ENCODE measurements at regions of chr10 and their contacts with region 1.

Region 1: GRCh38 chr10:51389415-51390321 is 309.7 kb downstream of the CSTF2T start:
- DNase-seq: peak; percentile 37 to 60 (median 46)
- ATAC-seq: peak; percentile 55 to 80 (median 73)
- H3K4me3 ChIP-seq: no peak overlapping the region
- H3K27ac ChIP-seq: peak overlapping the region in 3 of 12 donors; percentile 10 to 19 (median 19)
- H3K4me1 ChIP-seq: peaks cover 0 to 23% (median 6%) of the 10 kb centered on the region in 12 donors
- H3K27me3 ChIP-seq: no peaks in the 10 kb centered on the region
- CTCF ChIP-seq: peak; percentile 53 to 81 (median 74)
- POLR2A ChIP-seq: no peak

Region 2: GRCh38 chr10:51377932-51378599 is 11.6 kb before region 1 on chr10:
- intact Hi-C with region 1: no loop called
- DNase-seq: no peak
- ATAC-seq: peak in 1 of 4 donors; percentile 9
- H3K4me3 ChIP-seq: no peak overlapping the region
- H3K27ac ChIP-seq: peak overlapping the region in 4 of 12 donors; percentile 3 to 36 (median 28)
- H3K4me1 ChIP-seq: peaks cover 0 to 25% (median 7%) of the 10 kb centered on the region in 12 donors
- H3K27me3 ChIP-seq: no peaks in the 10 kb centered on the region
- CTCF ChIP-seq: no peak
- POLR2A ChIP-seq: no peak

Region 3: GRCh38 chr10:51422311-51423120 is 32.8 kb after region 1 on chr10:
- intact Hi-C with region 1: loop called in 2 of 10 experiments (anchors 5 kb)
- DNase-seq: peak; percentile 52 to 61 (median 57)
- ATAC-seq: peak; percentile 47 to 72 (median 60)
- H3K4me3 ChIP-seq: no peak overlapping the region
- H3K27ac ChIP-seq: peak overlapping the region; percentile 52 to 80 (median 72)
- H3K4me1 ChIP-seq: peaks cover 0 to 48% (median 10%) of the 10 kb centered on the region in 12 donors
- H3K27me3 ChIP-seq: no peaks in the 10 kb centered on the region
- CTCF ChIP-seq: peak; percentile 39 to 84 (median 70)
- POLR2A ChIP-seq: no peak

Region 4: DNA sequence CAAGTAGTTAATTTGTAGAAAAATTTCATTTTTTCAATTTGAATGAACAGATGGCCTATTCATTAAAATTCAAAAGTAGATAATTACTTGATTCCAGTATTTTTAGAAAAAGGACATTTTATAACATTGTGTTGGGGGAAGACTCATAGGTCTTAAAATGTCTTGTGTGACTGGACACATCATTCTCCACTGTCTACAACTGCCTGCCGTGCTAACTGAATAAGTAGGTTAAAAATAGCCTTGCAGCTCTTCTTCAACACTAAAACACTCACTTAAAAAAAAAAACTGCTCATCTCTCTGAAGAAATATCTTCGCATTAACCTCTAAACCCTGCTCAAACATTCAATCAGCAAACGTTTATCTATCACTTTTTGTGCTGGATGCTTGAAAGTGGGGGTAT is 55.9 kb after region 1 on chr10:
- intact Hi-C with region 1: loop called in 1 of 10 experiments (anchors 2 kb)
- DNase-seq: no peak
- ATAC-seq: peak in 2 of 4 donors; percentile 45 to 65
- H3K4me3 ChIP-seq: no peak overlapping the region
- H3K27ac ChIP-seq: no peak overlapping the region
- H3K4me1 ChIP-seq: peaks cover 0 to 14% (median 0%) of the 10 kb centered on the region in 12 donors
- H3K27me3 ChIP-seq: no peaks in the 10 kb centered on the region
- CTCF ChIP-seq: no peak
- POLR2A ChIP-seq: no peak

Measured in heart left ventricle (tissue), 16 donors.